B cell (primary cell): ENCODE measurements at regions of chr18 and their contacts with region 1.

Region 1: DNA sequence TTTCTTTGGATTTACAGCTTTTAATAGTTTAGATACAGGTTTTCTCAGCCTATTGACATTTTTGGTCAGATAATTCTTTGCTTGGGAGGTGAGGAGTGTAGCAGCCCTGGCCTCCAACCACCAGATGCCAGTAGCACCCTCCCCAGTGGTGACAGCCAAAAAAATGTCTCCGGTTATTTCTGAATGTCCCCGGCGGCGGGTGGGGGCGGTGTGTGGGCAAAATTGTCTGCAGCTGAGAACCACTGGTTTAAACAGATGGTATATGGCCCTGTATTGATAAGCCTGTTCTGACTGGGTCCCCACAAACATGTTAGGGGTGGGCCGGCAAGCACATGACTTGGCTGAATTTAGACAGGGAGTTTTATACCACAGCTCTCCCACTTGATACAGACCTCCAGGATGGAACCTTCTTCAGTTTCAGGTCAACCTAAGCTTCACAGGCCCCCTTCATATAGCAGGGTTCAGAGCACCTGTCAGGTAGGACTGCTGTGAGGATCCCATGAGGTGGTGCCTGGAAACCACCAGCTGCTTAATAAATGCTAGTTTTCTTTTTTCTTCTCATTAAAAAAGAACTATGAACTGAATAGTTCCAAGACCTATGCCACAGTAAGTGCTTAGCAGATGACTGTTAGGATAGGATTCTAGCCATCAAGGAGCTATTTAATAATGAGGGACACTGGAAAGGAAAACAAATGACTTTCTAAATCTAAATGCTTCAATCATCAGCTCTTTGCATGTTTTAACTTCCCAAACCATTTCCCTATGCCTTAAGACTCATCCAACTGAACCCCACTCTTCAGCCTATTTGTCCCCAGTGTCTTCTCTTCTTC is 18.1 kb downstream of the LPIN2 start:
- DNase-seq: peak; percentile 81
- ATAC-seq: peak; percentile 95
- H3K4me3 ChIP-seq: peak overlapping the region in 3 of 5 experiments; percentile 12 to 38 (median 21)
- H3K4me3 Mint-ChIP-seq: peak overlapping the region; percentile 50
- H3K27ac ChIP-seq: peak overlapping the region in 1 of 2 donors; percentile 4
- H3K27ac Mint-ChIP-seq: peak overlapping the region; percentile 29
- H3K4me1 ChIP-seq: peaks cover 9 to 14% of the 10 kb centered on the region in 2 donors
- H3K4me1 Mint-ChIP-seq: peaks cover 35% of the 10 kb centered on the region
- H3K27me3 ChIP-seq: no peaks in the 10 kb centered on the region
- H3K27me3 Mint-ChIP-seq: no peaks in the 10 kb centered on the region
- CTCF ChIP-seq: peak; percentile 68

Region 2: GRCh38 chr18:2494921-2495320 is 499.9 kb before region 1 on chr18:
- CTCF ChIA-PET with region 1: no interaction called
- POLR2A ChIA-PET with region 1: no interaction called
- intact Hi-C with region 1: no loop called
- DNase-seq: no peak
- ATAC-seq: no peak
- H3K4me3 ChIP-seq: no peak overlapping the region
- H3K4me3 Mint-ChIP-seq: no peak overlapping the region
- H3K27ac ChIP-seq: no peak overlapping the region
- H3K27ac Mint-ChIP-seq: no peak overlapping the region
- H3K4me1 ChIP-seq: no peaks in the 10 kb centered on the region
- H3K4me1 Mint-ChIP-seq: no peaks in the 10 kb centered on the region
- H3K27me3 ChIP-seq: no peaks in the 10 kb centered on the region
- H3K27me3 Mint-ChIP-seq: peaks cover 19% of the 10 kb centered on the region
- CTCF ChIP-seq: no peak

Region 3: DNA sequence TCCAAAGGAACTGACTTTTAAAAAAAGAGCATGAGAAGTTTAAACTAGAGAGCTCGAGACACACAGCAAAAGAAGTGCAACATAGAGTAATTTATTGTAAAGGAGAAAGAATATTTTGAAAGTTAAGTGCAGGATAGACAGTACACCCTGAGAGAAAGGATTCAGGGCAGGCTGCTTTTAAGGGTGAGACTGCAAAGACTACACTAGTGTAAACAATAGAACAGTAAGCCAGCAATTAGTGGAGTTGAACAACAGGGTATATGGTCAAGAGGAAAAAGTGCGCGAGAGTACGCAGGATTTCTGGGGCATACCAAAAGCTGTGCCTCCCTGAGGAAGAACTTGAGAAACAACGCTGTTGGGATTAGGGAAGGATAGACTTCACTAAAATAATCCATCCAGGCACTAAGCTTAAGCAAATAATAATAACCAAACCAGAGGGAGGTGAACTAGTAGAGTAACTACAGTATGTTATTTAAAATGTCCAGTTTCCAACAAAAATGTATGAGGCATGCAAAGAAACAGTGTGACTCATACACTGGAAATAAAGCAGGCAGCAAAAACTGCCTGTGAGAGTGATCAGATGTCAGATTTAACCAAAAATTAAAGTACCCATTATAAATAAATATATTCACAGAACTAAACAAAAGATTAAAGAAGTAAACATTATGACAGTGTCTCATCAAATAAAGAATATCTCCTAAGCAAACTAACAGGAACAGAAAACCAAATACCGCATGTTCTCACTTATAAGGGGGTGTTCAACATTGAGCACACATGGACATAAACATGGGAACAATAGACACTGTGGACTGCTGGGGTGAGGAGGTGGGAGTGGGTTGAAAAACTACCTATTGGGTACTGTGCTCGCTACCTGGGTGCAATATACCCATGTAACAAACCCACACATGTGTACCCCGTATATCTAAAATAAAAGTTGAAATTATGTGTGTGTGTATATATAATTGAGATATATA is 188.6 kb before region 1 on chr18:
- CTCF ChIA-PET with region 1: no interaction called
- POLR2A ChIA-PET with region 1: no interaction called
- intact Hi-C with region 1: no loop called
- DNase-seq: no peak
- ATAC-seq: no peak
- H3K4me3 ChIP-seq: no peak overlapping the region
- H3K4me3 Mint-ChIP-seq: no peak overlapping the region
- H3K27ac ChIP-seq: no peak overlapping the region
- H3K27ac Mint-ChIP-seq: no peak overlapping the region
- H3K4me1 ChIP-seq: no peaks in the 10 kb centered on the region
- H3K4me1 Mint-ChIP-seq: no peaks in the 10 kb centered on the region
- H3K27me3 ChIP-seq: no peaks in the 10 kb centered on the region
- H3K27me3 Mint-ChIP-seq: no peaks in the 10 kb centered on the region
- CTCF ChIP-seq: no peak

Region 4: DNA sequence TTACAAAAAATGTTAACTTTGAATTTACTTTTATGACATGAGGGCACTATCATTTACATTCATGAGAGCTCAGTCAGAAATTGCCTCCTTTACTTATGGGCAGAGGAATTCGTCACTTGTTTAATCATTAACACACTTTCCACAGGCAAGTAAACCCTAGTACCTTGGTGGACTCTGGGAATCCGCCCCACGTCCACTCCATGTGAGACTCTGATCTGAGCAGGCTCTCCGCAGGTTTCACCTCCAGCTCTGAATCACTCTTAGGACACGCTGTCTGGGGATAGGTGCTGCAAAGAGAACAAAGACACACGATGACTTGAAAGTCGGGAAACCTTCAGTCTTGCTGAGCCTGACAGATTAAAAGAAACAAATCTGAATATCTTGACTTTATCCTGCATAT is 55.5 kb before region 1 on chr18:
- CTCF ChIA-PET with region 1: interaction called, 255 read pairs
- POLR2A ChIA-PET with region 1: no interaction called
- intact Hi-C with region 1: no loop called
- DNase-seq: no peak
- ATAC-seq: no peak
- H3K4me3 ChIP-seq: no peak overlapping the region
- H3K4me3 Mint-ChIP-seq: no peak overlapping the region
- H3K27ac ChIP-seq: no peak overlapping the region
- H3K27ac Mint-ChIP-seq: no peak overlapping the region
- H3K4me1 ChIP-seq: no peaks in the 10 kb centered on the region
- H3K4me1 Mint-ChIP-seq: no peaks in the 10 kb centered on the region
- H3K27me3 ChIP-seq: no peaks in the 10 kb centered on the region
- H3K27me3 Mint-ChIP-seq: no peaks in the 10 kb centered on the region
- CTCF ChIP-seq: no peak

Region 5: DNA sequence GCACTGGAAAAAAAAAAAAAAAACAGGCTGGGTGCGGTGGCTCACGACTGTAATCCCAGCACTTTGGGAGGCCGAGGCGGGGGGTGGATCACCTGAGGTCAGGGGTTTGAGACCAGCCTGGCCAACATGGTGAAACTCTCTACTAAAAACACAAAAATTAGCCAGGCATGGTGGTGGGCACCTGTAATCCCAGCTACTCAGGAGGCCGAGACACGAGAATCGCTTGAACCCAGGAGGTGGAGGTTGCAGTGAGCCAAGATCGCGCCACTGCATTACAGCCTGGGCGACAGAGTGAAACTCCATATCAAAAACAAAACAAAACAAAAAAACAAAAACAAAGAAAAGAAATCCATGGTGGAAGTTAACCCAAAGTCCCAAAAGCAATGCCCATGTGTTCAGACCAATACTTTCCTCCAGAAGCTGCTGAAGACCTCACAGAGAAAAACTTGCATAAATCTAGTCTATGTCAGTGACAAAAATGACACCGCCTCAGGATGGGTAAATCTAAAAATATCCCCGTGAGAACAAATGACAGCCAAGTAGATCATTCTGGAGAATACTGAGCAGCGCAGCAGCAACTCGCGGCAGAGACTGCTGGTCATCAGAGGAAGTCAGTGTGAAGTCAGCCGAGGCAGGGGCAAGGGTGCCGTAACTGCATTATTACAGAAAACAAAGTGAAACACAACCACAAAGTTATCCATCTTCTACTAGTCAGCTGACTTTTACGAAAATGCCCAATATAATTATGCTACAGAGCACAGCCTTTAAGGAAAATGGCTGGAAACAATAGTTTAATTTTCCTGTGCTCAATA is 22.9 kb before region 1 on chr18:
- CTCF ChIA-PET with region 1: interaction called, 12 read pairs
- POLR2A ChIA-PET with region 1: no interaction called
- intact Hi-C with region 1: no loop called
- DNase-seq: peak; percentile 86
- ATAC-seq: peak; percentile 81
- H3K4me3 ChIP-seq: peak overlapping the region; percentile 18 to 58 (median 47)
- H3K4me3 Mint-ChIP-seq: peak overlapping the region; percentile 88
- H3K27ac ChIP-seq: peak overlapping the region; percentile 89 to 91
- H3K27ac Mint-ChIP-seq: peak overlapping the region; percentile 96
- H3K4me1 ChIP-seq: peaks cover 64 to 66% of the 10 kb centered on the region in 2 donors
- H3K4me1 Mint-ChIP-seq: peaks cover 70% of the 10 kb centered on the region
- H3K27me3 ChIP-seq: no peaks in the 10 kb centered on the region
- H3K27me3 Mint-ChIP-seq: no peaks in the 10 kb centered on the region
- CTCF ChIP-seq: no peak

Region 6: DNA sequence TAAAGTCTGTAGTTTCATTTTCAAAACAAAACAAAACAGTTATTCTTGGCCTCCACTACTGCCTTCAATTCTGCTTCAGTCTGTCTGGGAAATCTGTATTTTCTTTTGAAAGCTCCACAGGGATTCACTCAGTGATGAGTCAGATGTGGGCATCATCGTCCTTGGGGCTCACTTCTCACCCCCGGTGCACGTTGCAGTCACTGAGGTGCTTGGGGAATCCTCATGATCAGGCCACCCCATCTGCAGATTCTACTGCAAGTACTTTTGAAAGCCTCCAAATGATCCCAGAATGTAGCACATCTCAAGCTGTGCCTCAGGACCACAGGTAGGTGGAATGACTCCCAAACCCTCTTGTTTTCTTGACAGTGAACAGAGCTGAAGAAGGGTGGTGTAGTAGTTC is 16.2 kb before region 1 on chr18:
- CTCF ChIA-PET with region 1: interaction called, 15 read pairs
- POLR2A ChIA-PET with region 1: interaction called, 3 read pairs
- intact Hi-C with region 1: no loop called
- DNase-seq: peak; percentile 35
- ATAC-seq: no peak
- H3K4me3 ChIP-seq: peak overlapping the region in 2 of 5 experiments; percentile 5 to 46
- H3K4me3 Mint-ChIP-seq: peak overlapping the region; percentile 77
- H3K27ac ChIP-seq: peak overlapping the region; percentile 78 to 91
- H3K27ac Mint-ChIP-seq: peak overlapping the region; percentile 94
- H3K4me1 ChIP-seq: peaks cover 58 to 61% of the 10 kb centered on the region in 2 donors
- H3K4me1 Mint-ChIP-seq: peaks cover 67% of the 10 kb centered on the region
- H3K27me3 ChIP-seq: no peaks in the 10 kb centered on the region
- H3K27me3 Mint-ChIP-seq: no peaks in the 10 kb centered on the region
- CTCF ChIP-seq: no peak

Region 7: GRCh38 chr18:3012964-3013804 is 18.4 kb after region 1 on chr18 and contains the start of gene LPIN2:
- CTCF ChIA-PET with region 1: interaction called, 17 read pairs
- POLR2A ChIA-PET with region 1: interaction called, 4 read pairs
- intact Hi-C with region 1: no loop called
- DNase-seq: peak; percentile 96
- ATAC-seq: peak; percentile 83
- H3K4me3 ChIP-seq: peak within 1 kb of the TSS; percentile 43 to 75 (median 73)
- H3K4me3 Mint-ChIP-seq: peak within 1 kb of the TSS; percentile 93
- H3K27ac ChIP-seq: peak within 1 kb of the TSS; percentile 74 to 82
- H3K27ac Mint-ChIP-seq: peak within 1 kb of the TSS; percentile 89
- H3K4me1 ChIP-seq: peaks cover 51 to 54% of the 10 kb centered on the region in 2 donors
- H3K4me1 Mint-ChIP-seq: peaks cover 55% of the 10 kb centered on the region
- H3K27me3 ChIP-seq: no peaks in the 10 kb centered on the region
- H3K27me3 Mint-ChIP-seq: no peaks in the 10 kb centered on the region
- CTCF ChIP-seq: no peak
- total RNA-seq, gene LPIN2: 31.0 and 32.9 TPM in 2 replicates

Region 8: DNA sequence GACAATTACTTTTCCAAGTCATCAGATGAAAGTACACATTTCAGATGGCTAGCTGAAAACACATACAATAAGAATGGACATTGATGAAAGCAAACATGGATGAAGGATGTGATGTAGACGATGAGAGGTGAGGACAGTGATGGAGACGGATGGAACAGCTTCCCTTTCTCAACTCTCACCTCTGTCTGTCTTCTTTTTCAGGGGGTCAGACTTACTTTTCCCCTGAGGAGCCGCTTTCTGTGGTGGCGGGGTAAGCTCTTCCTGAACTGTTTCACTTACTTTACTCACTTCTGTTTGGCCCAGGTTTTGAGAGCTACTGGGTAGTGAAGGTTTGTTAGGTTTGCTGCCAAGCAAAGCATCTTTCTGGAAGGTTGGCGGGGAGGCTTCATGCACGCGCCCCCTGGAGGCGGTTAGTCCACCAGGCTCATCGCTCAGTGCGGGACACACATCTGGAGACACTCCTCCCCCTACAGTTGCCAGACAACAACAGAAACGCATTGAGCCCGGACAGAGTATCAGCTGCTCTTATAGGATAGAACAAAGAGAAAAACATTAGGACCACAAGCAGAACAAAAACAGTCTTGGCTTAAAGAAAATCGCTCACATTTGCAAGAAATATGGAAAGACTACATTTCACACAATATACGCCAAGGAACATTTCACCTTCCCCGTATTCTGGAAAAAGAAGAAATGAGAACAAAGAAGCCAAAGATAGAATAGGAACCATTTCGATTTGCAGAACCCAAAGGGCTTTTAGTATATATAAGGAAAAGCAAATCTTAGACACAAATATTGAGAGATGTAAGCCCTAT is 134.4 kb after region 1 on chr18:
- CTCF ChIA-PET with region 1: interaction called, 70 read pairs
- POLR2A ChIA-PET with region 1: no interaction called
- intact Hi-C with region 1: loop called (anchors 1 kb)
- DNase-seq: peak; percentile 80
- ATAC-seq: peak; percentile 98
- H3K4me3 ChIP-seq: no peak overlapping the region
- H3K4me3 Mint-ChIP-seq: peak overlapping the region; percentile 4
- H3K27ac ChIP-seq: no peak overlapping the region
- H3K27ac Mint-ChIP-seq: no peak overlapping the region
- H3K4me1 ChIP-seq: peaks cover 0 to 4% of the 10 kb centered on the region in 2 donors
- H3K4me1 Mint-ChIP-seq: peaks cover 6% of the 10 kb centered on the region
- H3K27me3 ChIP-seq: no peaks in the 10 kb centered on the region
- H3K27me3 Mint-ChIP-seq: no peaks in the 10 kb centered on the region
- CTCF ChIP-seq: peak; percentile 89